Activated CD4-positive, alpha-beta memory T cell treated with anti-CD3 and anti-CD28 coated beads for 36 hours (primary cell): ENCODE measurements at regions of chr19 and their contacts with region 1.

Region 1: DNA sequence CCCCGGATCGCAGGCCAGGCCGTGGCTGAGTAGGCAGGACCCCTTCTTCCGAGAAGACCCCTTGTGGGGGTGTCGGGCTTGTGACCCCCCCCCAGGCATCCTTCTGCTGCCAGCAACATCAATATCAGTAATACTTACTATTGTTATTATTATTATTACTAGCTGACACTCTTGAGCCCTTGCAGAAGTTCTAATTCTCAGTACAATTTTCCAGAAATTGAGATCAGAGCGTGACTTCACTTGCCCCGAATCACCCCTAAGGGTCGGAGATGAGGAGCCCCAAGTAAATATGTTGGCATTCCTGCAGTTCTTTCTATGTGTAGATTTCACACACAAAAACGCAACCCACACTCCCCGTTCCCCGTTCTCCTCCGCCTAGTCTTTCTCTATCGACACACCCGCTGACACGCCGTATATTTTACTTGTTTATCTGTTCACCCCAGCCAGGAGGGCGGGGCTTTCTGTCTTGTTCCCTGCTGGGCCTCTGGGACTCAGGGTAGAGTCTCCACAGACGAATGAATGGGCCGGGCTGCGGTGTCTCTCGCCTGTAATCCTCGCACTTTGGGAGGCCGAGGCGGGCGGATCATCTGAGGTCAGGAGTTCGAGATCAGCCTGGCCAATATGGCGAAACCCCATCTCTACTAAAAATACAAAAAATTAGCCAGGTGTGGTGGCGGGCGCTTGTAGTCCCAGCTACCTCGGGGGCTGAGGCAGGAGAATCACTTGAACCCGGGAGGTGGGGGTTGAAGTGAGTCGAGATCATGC is 14.7 kb downstream of the TLE5 start:
- DNase-seq: peak; percentile 83
- H3K4me3 Mint-ChIP-seq: peak overlapping the region; percentile 75
- H3K27ac Mint-ChIP-seq: peak overlapping the region; percentile 79
- H3K4me1 Mint-ChIP-seq: peaks cover 9% of the 10 kb centered on the region
- H3K27me3 Mint-ChIP-seq: no peaks in the 10 kb centered on the region

Region 2: DNA sequence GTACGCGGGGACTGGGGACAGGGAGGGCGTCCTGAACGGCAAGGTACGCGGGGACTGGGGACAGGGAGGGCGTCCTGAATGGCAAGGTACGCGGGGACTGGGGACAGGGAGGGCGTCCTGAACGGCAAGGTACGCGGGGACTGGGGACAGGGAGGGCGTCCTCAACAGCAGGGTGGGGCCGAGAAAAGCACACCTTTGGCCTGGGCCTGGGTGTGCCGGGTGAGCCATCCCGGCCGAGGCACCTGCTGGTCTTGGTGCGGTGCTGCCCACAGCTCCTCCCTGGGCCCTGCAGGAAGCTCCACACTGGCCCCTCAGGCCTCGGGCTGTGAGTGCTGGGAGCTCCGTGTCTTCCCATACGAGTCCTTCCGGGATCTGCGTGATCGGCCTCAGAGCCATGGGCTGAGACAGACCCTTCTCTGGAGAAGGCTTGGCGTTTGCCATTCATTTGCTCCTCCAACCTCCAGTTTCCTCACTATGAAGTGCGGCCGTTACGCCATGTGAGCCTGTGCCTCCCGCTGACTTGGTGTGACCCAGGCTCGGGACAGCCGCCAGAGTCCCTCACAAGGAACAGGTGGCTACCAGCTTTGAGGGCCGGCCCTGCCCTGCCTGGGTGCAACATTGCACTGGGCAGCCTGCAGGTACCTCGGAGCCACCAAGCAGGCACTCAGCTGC is 235.7 kb before region 1 on chr19:
- CTCF ChIA-PET with region 1: no interaction called
- POLR2A ChIA-PET with region 1: no interaction called
- intact Hi-C with region 1: no loop called
- DNase-seq: no peak
- H3K4me3 Mint-ChIP-seq: no peak overlapping the region
- H3K27ac Mint-ChIP-seq: no peak overlapping the region
- H3K4me1 Mint-ChIP-seq: no peaks in the 10 kb centered on the region
- H3K27me3 Mint-ChIP-seq: no peaks in the 10 kb centered on the region

Region 3: GRCh38 chr19:3062168-3063102 is 14.8 kb after region 1 on chr19 and contains the start of gene TLE5:
- CTCF ChIA-PET with region 1: interaction called, 3 read pairs
- POLR2A ChIA-PET with region 1: interaction called, 14 read pairs
- intact Hi-C with region 1: no loop called
- DNase-seq: peak; percentile 74
- H3K4me3 Mint-ChIP-seq: peak within 1 kb of the TSS; percentile 85
- H3K27ac Mint-ChIP-seq: peak within 1 kb of the TSS; percentile 97
- H3K4me1 Mint-ChIP-seq: peaks cover 29% of the 10 kb centered on the region
- H3K27me3 Mint-ChIP-seq: no peaks in the 10 kb centered on the region
- total RNA-seq, gene TLE5: 411 to 426 TPM